SK-N-SH (cell line): ENCODE measurements at regions of chr11 and their contacts with region 1.

Region 1: GRCh38 chr11:10405855-10406592 is 49.0 kb upstream of the AMPD3 start:
- DNase-seq: peak; percentile 77
- H3K4me3 ChIP-seq: peak overlapping the region in 1 of 2 experiments; percentile 18; a peak in 1 of 4 replicates
- H3K27ac ChIP-seq: peak overlapping the region; percentile 59 to 83
- H3K4me1 ChIP-seq: peaks cover 36 to 42% of the 10 kb centered on the region in 2 experiments; a peak in 3 of 4 replicates
- H3K27me3 ChIP-seq: no peaks in the 10 kb centered on the region
- CTCF ChIP-seq: peak; percentile 82
- EP300 ChIP-seq: peak in 1 of 2 experiments; percentile 88; a peak in 2 of 4 replicates
- RAD21 ChIP-seq: peak; percentile 96

Region 2: DNA sequence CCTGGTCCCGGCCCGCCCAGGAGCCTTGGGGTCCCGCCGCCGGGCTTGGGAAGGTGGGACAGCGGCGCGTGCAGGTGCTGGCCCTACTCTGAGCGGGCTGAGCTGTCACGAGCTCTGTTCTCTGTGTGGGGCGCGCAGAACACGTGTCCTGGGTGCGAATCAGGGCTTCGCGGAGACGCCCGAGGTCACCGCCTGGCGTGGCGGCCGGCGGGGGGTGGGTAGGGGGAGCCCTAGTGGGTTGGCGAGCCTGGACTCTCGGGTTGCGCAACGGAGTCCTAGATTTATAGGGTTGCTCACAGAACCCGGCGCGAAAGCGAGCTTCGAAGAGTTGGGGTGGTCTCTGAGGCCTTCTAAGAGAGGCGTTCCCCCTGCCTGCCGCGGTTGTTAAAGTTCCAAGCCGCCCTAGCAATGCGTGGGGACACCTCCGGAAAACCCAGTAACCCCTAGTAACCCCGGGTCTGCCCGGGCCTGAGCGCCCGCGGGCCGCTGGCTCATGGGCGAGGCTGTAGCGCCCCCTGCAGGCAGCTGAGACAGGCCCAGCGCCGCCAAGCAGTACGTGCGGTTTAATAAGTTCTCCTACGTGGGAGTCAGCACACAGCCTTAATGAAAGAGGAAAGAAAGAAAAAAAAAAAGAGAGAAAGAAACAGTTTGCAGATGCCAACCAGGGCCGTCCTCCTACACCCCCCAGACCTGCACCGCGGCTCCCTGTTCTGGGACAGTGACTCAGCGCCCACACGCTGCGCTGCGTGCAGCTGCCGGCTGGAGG is 98.4 kb before region 1 on chr11:
- CTCF ChIA-PET with region 1: interaction called, 14 read pairs
- POLR2A ChIA-PET with region 1: interaction called, 5 read pairs
- DNase-seq: peak; percentile 91
- H3K4me3 ChIP-seq: peak overlapping the region; percentile 66 to 87
- H3K27ac ChIP-seq: peak overlapping the region; percentile 75 to 79
- H3K4me1 ChIP-seq: peaks cover 7 to 39% of the 10 kb centered on the region in 2 experiments
- H3K27me3 ChIP-seq: no peaks in the 10 kb centered on the region
- CTCF ChIP-seq: peak; percentile 100
- EP300 ChIP-seq: peak; percentile 18 to 27; a peak in 1 of 4 replicates
- RAD21 ChIP-seq: peak; percentile 84

Region 3: GRCh38 chr11:10375280-10375971 is 30.6 kb before region 1 on chr11:
- CTCF ChIA-PET with region 1: interaction called, 10 read pairs
- POLR2A ChIA-PET with region 1: no interaction called
- DNase-seq: no peak
- H3K4me3 ChIP-seq: no peak overlapping the region
- H3K27ac ChIP-seq: peak overlapping the region; percentile 71 to 79
- H3K4me1 ChIP-seq: peaks cover 22 to 30% of the 10 kb centered on the region in 2 experiments
- H3K27me3 ChIP-seq: no peaks in the 10 kb centered on the region
- CTCF ChIP-seq: no peak
- EP300 ChIP-seq: peak in 1 of 2 experiments; percentile 73; a peak in 1 of 4 replicates
- RAD21 ChIP-seq: no peak

Region 4: DNA sequence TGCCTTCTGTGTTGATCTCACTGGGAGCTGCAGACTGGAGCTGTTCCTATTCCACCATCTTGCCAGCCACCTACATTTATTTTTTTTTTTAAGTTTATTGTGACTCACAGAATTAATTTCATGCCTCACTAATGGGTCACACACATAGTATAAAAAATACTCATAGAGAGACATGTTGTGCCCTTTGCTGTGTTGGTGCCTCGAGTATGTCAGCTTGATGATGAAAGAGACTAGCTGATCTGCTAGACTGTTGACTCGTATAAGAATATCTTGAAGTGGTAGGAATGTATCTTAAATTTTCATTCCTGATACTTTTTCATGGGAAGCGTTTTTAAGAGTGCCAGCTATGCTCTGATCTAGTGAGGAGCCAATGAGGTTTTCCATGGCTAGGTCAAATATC is 20.5 kb after region 1 on chr11:
- CTCF ChIA-PET with region 1: interaction called, 15 read pairs
- POLR2A ChIA-PET with region 1: no interaction called
- DNase-seq: no peak
- H3K4me3 ChIP-seq: no peak overlapping the region
- H3K27ac ChIP-seq: no peak overlapping the region
- H3K4me1 ChIP-seq: no peaks in the 10 kb centered on the region; a peak in 2 of 4 replicates
- H3K27me3 ChIP-seq: no peaks in the 10 kb centered on the region; the same call in 1 of the 2 replicates
- CTCF ChIP-seq: no peak
- EP300 ChIP-seq: no peak
- RAD21 ChIP-seq: no peak

Region 5: DNA sequence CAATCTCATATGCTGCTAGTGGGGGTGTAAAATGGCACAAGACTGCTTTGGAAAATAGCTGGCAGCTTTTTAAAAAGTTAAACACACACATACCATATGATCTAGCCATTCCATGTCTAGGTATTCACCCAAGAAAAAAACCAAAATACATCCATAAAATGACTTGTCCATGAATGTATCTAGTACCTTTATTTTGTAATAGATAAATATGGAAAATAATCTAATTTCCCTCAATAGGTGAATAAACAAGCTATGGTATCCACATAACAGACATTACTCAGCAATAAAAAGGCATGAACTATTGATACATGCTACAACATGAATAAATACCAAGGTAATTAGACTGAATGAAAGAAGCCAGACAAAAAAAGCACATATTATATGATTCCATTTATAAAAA is 112.1 kb after region 1 on chr11:
- CTCF ChIA-PET with region 1: interaction called, 11 read pairs
- POLR2A ChIA-PET with region 1: no interaction called
- DNase-seq: no peak
- H3K4me3 ChIP-seq: no peak overlapping the region
- H3K27ac ChIP-seq: no peak overlapping the region
- H3K4me1 ChIP-seq: peaks cover 0 to 9% of the 10 kb centered on the region in 2 experiments; a peak in 1 of 4 replicates
- H3K27me3 ChIP-seq: no peaks in the 10 kb centered on the region
- CTCF ChIP-seq: no peak
- EP300 ChIP-seq: no peak
- RAD21 ChIP-seq: no peak

Region 6: GRCh38 chr11:10653926-10654810 is 248.1 kb after region 1 on chr11:
- CTCF ChIA-PET with region 1: interaction called, 31 read pairs
- POLR2A ChIA-PET with region 1: no interaction called
- DNase-seq: peak; percentile 66
- H3K4me3 ChIP-seq: no peak overlapping the region; a peak in 1 of 4 replicates
- H3K27ac ChIP-seq: no peak overlapping the region
- H3K4me1 ChIP-seq: peaks cover 0 to 31% of the 10 kb centered on the region in 2 experiments; a peak in 3 of 4 replicates
- H3K27me3 ChIP-seq: no peaks in the 10 kb centered on the region
- CTCF ChIP-seq: peak; percentile 82
- EP300 ChIP-seq: no peak
- RAD21 ChIP-seq: peak; percentile 82

Region 7: GRCh38 chr11:10735481-10736475 is 329.8 kb after region 1 on chr11:
- CTCF ChIA-PET with region 1: interaction called, 58 read pairs
- POLR2A ChIA-PET with region 1: no interaction called
- DNase-seq: peak; percentile 93
- H3K4me3 ChIP-seq: peak overlapping the region; percentile 10 to 54; a peak in 2 of 4 replicates
- H3K27ac ChIP-seq: peak overlapping the region; percentile 62 to 68; a peak in 3 of 4 replicates
- H3K4me1 ChIP-seq: peaks cover 9 to 11% of the 10 kb centered on the region in 2 experiments; a peak in 2 of 4 replicates
- H3K27me3 ChIP-seq: no peaks in the 10 kb centered on the region
- CTCF ChIP-seq: peak; percentile 98
- EP300 ChIP-seq: peak in 1 of 2 experiments; percentile 8; a peak in 1 of 4 replicates
- RAD21 ChIP-seq: peak; percentile 98